ENCODE measurements at regions of chr16 and their contacts with region 1.

Region 1: DNA sequence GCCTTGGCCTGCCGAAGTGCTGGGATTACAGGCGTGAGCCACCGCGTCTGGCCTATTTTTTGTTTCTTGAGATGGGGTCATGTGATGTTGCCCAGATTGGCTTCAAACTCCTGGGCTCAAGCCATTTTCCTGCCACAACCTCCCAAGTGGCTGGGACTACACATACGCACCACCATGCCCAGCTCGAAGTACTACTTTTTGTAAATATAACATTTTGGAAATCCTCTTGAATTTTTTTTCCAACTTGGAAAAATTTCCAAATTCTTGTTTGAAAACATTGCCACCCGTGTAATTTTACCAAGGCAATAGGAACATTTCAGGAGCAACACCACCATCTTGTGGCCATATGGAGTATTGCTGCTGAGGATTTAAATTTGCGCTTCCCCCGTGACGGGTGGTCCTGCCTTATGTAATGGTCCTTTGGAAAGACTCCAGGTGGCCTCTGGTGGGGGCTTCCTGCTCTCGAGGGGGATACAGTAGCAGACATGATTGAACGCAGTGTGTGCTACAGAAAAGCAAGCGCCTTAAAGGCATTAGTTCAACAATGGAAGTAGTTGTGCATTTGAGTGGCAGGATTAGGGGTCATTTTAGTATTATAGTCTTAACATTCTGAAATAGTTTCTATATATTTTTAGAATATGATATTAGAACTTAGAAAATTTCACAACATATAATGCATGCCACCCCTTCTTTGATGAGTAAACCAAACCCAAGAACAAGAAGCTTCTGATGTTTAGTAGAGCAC is 8.0 kb downstream of the FLYWCH1 start:
- DNase-seq: peak; percentile 42 to 65 (median 61)
- H3K4me3 ChIP-seq: no peak overlapping the region
- H3K4me3 Mint-ChIP-seq: no peak overlapping the region
- H3K27ac ChIP-seq: no peak overlapping the region
- H3K27ac Mint-ChIP-seq: peak overlapping the region in 4 of 7 donors; percentile 35 to 82 (median 58)
- H3K4me1 ChIP-seq: peaks cover 9 to 15% of the 10 kb centered on the region in 2 donors
- H3K4me1 Mint-ChIP-seq: peaks cover 15% of the 10 kb centered on the region
- H3K27me3 ChIP-seq: no peaks in the 10 kb centered on the region
- H3K27me3 Mint-ChIP-seq: peaks cover 0 to 3% (median 0%) of the 10 kb centered on the region in 3 donors
- CTCF ChIP-seq: peak; percentile 91

Region 2: GRCh38 chr16:2874912-2875362 is 44.7 kb before region 1 on chr16:
- intact Hi-C with region 1: loop called (anchors 2 to 5 kb)
- DNase-seq: peak; percentile 74 to 83 (median 76)
- H3K4me3 ChIP-seq: no peak overlapping the region
- H3K4me3 Mint-ChIP-seq: no peak overlapping the region
- H3K27ac ChIP-seq: no peak overlapping the region
- H3K27ac Mint-ChIP-seq: peak overlapping the region in 1 of 7 donors; percentile 31
- H3K4me1 ChIP-seq: peaks cover 8 to 10% of the 10 kb centered on the region in 2 donors
- H3K4me1 Mint-ChIP-seq: peaks cover 11% of the 10 kb centered on the region
- H3K27me3 ChIP-seq: no peaks in the 10 kb centered on the region
- H3K27me3 Mint-ChIP-seq: peaks cover 11 to 12% (median 11%) of the 10 kb centered on the region in 3 donors
- CTCF ChIP-seq: peak; percentile 92

Region 3: DNA sequence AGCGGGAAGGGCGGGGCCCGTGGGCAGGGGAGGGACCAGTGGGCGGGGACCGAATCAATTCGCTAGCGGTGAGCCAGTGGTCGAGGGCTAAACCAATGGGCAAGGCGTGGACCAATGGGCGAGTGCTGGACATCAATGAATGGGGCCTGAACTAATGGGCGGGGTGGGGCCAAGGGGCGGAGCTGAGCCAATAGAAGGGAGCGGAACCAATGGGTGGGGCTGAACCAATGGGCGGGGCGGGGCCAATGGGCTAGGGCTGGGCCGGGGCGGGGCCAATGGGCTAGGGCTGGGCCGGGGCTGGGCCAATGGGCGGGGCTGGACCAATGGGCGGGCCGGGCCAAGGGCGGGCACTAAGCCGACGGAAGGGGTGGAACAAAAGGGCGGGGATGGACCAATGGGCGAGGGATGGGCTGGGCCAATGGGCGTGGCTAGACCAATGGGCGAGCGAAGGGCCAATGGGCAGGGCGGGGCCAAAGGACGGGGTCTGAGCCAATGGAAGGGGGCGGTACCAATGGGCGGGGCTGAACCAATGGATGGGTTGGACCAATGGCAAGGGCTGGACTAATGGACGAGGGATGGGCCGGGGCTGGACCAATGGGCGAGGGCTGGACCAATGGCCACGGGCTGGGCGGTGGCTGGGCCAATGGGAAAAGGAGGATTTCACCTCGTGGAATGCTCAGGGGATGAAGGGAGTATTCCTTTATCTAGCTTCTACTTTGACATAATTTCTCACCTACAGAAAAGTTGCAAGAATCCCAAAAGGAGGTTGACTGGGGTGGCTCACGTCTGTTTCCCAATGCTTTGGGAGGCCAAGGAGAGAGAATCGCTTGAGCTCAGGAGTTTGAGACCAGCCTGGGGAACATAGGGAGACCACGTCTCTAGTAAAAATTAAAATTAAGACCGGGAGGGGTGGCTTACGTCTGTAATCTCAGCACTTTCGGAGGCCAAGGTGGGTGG is 14.0 kb before region 1 on chr16:
- intact Hi-C with region 1: loop called in 1 of 2 experiments (anchors 2 kb)
- DNase-seq: peak; percentile 99 to 100 (median 99)
- H3K4me3 ChIP-seq: peak overlapping the region; percentile 39 to 99 (median 88)
- H3K4me3 Mint-ChIP-seq: peak overlapping the region; percentile 93 to 94
- H3K27ac ChIP-seq: peak overlapping the region; percentile 65 to 76
- H3K27ac Mint-ChIP-seq: peak overlapping the region; percentile 74 to 86 (median 84)
- H3K4me1 ChIP-seq: peaks cover 21 to 27% of the 10 kb centered on the region in 2 donors
- H3K4me1 Mint-ChIP-seq: peaks cover 28% of the 10 kb centered on the region
- H3K27me3 ChIP-seq: no peaks in the 10 kb centered on the region
- H3K27me3 Mint-ChIP-seq: peaks cover 0 to 1% (median 0%) of the 10 kb centered on the region in 3 donors
- CTCF ChIP-seq: no peak

Measured in CD14-positive monocyte (primary cell).